ENCODE measurements at regions of chr6 and their contacts with region 1.

Region 1: DNA sequence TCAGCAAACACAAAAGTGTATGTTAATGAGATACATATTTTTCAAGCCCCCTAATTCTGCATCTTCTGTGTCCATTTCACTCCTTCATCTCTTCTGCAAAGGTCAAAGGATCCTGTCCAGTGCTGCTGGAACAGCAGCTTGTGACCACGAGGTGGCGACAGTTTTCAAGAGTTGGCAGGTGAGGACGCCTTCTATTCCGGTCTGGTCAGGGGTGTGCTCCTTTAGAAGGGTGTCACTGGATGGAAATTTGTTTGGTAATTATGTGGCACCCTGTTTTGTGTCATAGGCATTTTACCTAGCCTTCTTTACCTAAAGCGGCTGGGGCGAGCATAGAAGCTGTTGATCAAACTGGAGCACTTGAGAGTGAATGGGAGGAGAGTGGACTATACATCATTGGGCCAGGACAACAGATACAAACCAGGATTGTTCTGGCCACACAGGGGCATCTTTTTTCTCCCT is 32.9 kb upstream of the ERVFRD-1 start:
- DNase-seq: peak; percentile 72 to 92 (median 85)
- ATAC-seq: peak; percentile 93
- H3K4me3 ChIP-seq: no peak overlapping the region
- H3K4me1 ChIP-seq: no peaks in the 10 kb centered on the region
- CTCF ChIP-seq: peak; percentile 83

Region 2: DNA sequence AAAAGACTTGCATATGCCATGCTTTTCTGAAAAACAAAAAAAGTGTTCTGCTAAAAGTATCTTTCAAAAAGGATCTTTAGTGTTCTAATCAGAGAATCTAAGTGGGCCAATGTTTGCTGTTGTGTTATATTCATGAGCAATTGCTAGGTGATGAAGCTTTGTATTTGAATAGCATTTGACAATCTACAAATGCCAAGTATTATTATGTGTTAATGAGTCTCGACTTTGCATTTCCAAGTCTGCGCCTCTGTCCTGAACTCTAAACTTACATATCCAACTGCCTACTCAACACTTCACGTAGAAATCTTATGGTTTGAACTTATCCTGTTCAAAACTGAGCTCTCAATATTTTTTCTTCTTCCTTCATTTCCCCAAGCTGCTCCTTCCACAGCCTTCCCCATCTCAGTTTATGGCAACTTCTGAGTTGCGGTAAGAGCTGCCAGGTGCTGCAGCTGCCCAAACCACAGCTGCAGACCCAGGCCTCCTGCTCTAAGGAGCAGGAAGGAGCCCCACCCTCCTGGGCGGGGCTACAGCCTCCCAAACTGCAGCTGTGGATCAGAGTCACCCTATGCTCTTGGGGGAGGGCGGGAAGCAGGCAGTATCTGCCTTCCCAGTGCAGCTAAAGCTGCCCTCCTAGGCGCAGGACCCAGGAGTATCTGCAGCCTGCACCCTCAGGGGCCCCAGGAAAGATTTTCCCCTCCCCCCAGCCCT is 289.3 kb before region 1 on chr6:
- intact Hi-C with region 1: no loop called
- DNase-seq: no peak
- ATAC-seq: no peak
- H3K4me3 ChIP-seq: no peak overlapping the region
- H3K4me1 ChIP-seq: no peaks in the 10 kb centered on the region
- CTCF ChIP-seq: no peak

Region 3: DNA sequence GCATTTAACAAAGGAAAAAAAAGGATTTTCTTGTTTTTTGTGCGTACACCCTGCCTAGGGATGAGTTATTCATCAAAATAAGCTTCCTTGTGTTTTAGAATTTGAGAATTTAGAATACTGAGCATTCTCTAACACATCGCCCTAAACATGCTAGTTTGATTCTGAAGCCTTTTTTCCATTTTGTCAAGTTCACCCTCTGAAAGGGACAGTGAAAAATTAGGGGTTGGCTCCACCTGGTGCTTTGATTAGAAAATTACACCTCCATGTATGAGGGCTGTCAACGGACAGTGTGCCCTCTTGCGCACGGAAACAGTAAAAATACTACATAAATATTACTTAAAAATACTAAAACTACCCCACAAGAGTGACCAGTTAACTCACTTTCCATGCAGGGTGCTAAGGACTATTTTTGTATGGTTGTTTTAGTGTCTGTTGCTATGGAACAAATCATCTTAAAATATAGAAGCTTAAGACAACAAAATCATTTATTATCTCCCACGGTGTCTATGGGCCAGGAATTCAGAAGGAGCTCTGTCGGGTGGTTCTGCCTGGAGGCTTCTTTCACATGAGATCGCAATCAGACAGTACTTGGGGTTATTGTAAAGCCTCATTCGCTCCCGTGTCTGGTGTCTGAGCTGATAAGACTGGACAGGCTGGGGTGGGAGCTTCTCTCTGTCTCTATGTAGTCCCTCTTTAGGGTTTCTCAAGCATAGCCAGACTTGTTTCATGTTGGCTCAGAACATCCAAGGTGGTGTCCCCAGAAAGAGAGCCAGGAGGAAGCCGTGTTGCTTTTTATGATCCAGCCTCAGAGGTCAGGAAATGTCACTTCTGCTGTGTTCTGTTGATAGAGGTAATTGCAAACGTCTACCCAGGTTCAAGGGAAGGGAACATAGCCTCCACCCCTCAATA is 352.0 kb after region 1 on chr6:
- intact Hi-C with region 1: loop called (anchors 2 to 5 kb)
- DNase-seq: peak in 1 of 3 donors; percentile 74
- ATAC-seq: peak; percentile 93
- H3K4me3 ChIP-seq: no peak overlapping the region
- H3K4me1 ChIP-seq: peaks cover 13% of the 10 kb centered on the region
- CTCF ChIP-seq: peak; percentile 75

Measured in mucosa of descending colon (tissue), 3 donors.